ENCODE measurements at regions of chr16 and their contacts with region 1.

Region 1: GRCh38 chr16:9123871-9124270 is 32.4 kb downstream of the HAPSTR1 start:
- DNase-seq: peak; percentile 75
- ATAC-seq: peak; percentile 88
- H3K4me3 ChIP-seq: peak overlapping the region in 1 of 5 experiments; percentile 7
- H3K4me3 Mint-ChIP-seq: peak overlapping the region; percentile 59
- H3K27ac ChIP-seq: peak overlapping the region in 1 of 2 donors; percentile 34
- H3K27ac Mint-ChIP-seq: peak overlapping the region; percentile 83
- H3K4me1 ChIP-seq: peaks cover 59 to 63% of the 10 kb centered on the region in 2 donors
- H3K4me1 Mint-ChIP-seq: peaks cover 59% of the 10 kb centered on the region
- H3K27me3 ChIP-seq: no peaks in the 10 kb centered on the region
- H3K27me3 Mint-ChIP-seq: no peaks in the 10 kb centered on the region
- CTCF ChIP-seq: no peak

Region 2: GRCh38 chr16:9077091-9077809 is 46.6 kb before region 1 on chr16:
- CTCF ChIA-PET with region 1: no interaction called
- POLR2A ChIA-PET with region 1: no interaction called
- intact Hi-C with region 1: loop called (anchors 1 kb)
- DNase-seq: peak; percentile 52
- ATAC-seq: peak; percentile 44
- H3K4me3 ChIP-seq: peak overlapping the region in 1 of 5 experiments; percentile 33
- H3K4me3 Mint-ChIP-seq: peak overlapping the region; percentile 23
- H3K27ac ChIP-seq: peak overlapping the region; percentile 21 to 61
- H3K27ac Mint-ChIP-seq: peak overlapping the region; percentile 68
- H3K4me1 ChIP-seq: peaks cover 21 to 27% of the 10 kb centered on the region in 2 donors
- H3K4me1 Mint-ChIP-seq: peaks cover 27% of the 10 kb centered on the region
- H3K27me3 ChIP-seq: no peaks in the 10 kb centered on the region
- H3K27me3 Mint-ChIP-seq: no peaks in the 10 kb centered on the region
- CTCF ChIP-seq: no peak